ENCODE measurements at regions of chr11 and their contacts with region 1.

Region 1: DNA sequence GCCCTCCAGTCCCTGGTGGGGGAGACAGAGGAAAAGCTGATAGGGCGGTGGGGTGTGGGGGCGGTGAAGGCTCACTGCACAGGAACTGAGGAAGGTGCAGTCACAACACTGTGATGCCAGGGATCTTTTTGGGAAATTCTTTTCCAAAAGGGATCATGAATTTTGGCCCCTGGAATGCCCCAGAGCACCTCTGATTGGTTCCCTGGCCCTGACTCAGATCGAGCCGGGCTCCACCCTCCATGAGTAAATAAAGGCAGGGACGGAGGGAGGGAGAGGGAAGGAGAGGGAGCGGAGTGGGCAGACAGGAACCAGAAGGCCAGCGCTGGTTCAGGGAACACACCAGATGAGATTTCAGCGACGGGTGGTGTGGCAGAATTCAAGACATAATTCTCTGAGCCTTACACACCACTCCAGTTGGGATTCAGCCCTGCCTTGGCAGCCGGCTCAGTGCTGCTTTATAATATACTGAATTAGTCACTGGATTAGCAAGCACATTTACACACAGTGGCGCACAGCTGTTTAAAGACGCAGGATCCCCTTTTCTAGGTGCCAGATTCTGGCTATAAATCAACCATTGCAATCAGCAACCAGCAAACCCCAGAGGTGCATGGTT is 80.3 kb downstream of the ETS1 start:
- DNase-seq: no peak
- ATAC-seq: peak; percentile 79
- H3K4me3 ChIP-seq: peak overlapping the region; percentile 29 to 58
- H3K27ac ChIP-seq: peak overlapping the region; percentile 96
- H3K4me1 ChIP-seq: peaks cover 100% of the 10 kb centered on the region
- H3K27me3 ChIP-seq: no peaks in the 10 kb centered on the region
- CTCF ChIP-seq: no peak

Region 2: GRCh38 chr11:128172046-128172878 is 334.8 kb before region 1 on chr11:
- CTCF ChIA-PET with region 1: no interaction called
- POLR2A ChIA-PET with region 1: no interaction called
- in situ Hi-C with region 1: no loop called
- intact Hi-C with region 1: loop called (anchors 5 kb)
- DNase-seq: peak; percentile 89
- ATAC-seq: peak; percentile 96
- H3K4me3 ChIP-seq: no peak overlapping the region
- H3K27ac ChIP-seq: peak overlapping the region; percentile 49
- H3K4me1 ChIP-seq: 0 out of 2 replicates have a peak, but pooled peaks cover 6% of the 10 kb centered on the region
- H3K27me3 ChIP-seq: no peaks in the 10 kb centered on the region
- CTCF ChIP-seq: peak; percentile 86

Region 3: DNA sequence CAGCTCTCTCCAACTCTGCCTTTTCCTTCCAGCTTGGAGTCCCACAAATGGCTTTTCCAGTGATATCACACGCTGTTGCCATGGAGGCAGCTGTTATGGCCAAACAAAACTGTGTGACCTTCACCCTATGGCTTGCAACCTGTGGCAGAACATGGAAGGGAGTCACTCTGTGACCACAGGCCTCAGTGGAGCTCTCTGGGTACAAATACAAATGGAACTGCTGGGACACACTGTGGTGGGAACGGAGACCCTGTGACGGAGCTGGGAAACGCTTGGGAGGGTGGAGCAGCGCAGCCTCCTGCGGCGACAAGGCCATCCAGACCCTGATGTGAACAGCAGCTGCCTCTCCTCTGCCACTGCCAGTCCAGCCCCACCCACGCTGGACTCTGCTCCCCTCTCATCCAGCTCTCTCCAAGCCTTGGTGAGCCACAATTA is 82.2 kb before region 1 on chr11:
- CTCF ChIA-PET with region 1: interaction called, 12 read pairs
- POLR2A ChIA-PET with region 1: no interaction called
- in situ Hi-C with region 1: no loop called
- intact Hi-C with region 1: no loop called
- DNase-seq: no peak
- ATAC-seq: no peak
- H3K4me3 ChIP-seq: no peak overlapping the region
- H3K27ac ChIP-seq: no peak overlapping the region
- H3K4me1 ChIP-seq: no peaks in the 10 kb centered on the region
- H3K27me3 ChIP-seq: no peaks in the 10 kb centered on the region
- CTCF ChIP-seq: no peak

Region 4: GRCh38 chr11:128453444-128454336 is 53.4 kb before region 1 on chr11:
- CTCF ChIA-PET with region 1: no interaction called
- POLR2A ChIA-PET with region 1: no interaction called
- in situ Hi-C with region 1: no loop called
- intact Hi-C with region 1: no loop called
- DNase-seq: peak; percentile 46
- ATAC-seq: no peak; the same call in 1 of the 2 replicates
- H3K4me3 ChIP-seq: no peak overlapping the region
- H3K27ac ChIP-seq: no peak overlapping the region
- H3K4me1 ChIP-seq: peaks cover 5% of the 10 kb centered on the region; the same call in 1 of the 2 replicates
- H3K27me3 ChIP-seq: no peaks in the 10 kb centered on the region
- CTCF ChIP-seq: no peak